Vagina (tissue), 2 donors: ENCODE measurements at regions of chr4 and their contacts with region 1.

Region 1: GRCh38 chr4:165532976-165533375 is 154.2 kb downstream of the CPE start:
- DNase-seq: peak in 1 of 2 donors; percentile 37
- H3K4me3 ChIP-seq: no peak overlapping the region
- H3K27ac ChIP-seq: no peak overlapping the region
- H3K4me1 ChIP-seq: no peaks in the 10 kb centered on the region
- H3K27me3 ChIP-seq: no peaks in the 10 kb centered on the region
- CTCF ChIP-seq: no peak
- POLR2A ChIP-seq: no peak

Region 2: DNA sequence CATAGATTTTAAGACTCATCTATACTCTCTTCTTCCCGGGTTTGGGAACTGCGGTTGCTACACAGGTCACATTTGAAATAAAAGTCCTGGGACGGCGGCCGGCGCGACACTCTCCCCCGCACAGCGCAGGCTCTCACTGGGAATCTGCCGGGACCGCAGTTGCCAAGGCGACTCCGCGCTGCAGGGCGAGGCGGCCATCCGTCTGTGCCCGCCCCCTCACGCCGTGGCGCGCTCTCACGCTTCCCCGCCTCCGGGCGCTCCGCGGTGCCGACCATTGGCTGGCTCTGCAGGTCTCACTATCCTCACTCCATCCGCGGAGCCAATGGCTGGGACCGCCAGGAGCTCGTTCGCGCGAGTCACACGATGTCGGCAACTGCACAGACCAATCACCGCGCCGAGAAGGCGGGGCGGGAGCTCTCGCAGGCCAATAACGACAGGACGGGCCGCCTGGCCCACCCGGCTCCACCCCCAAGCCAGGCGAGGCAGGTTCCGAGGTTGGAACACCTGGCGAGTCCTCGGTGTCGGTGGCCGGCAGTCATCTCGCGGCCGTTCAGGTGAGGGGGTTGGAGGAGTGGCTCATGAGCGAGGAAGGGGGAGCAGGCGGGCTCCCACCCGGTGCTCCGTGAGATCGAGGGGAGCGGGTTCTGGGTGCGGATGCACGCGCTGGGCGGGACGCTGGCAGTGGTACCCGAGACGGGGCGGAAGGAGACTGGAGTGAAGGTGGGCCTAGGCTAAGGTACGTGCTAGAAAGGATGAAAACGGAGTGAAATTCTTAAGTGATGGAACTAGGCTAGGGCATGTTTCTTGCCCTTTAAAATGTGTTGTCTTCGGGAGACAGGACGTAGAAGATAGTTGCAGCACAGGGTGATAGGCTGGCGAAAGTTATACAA is 205.5 kb before region 1 on chr4 and contains the start of gene MSMO1:
- intact Hi-C with region 1: no loop called
- DNase-seq: peak; percentile 98 to 100
- H3K4me3 ChIP-seq: peak within 1 kb of the TSS; percentile 75 to 89
- H3K27ac ChIP-seq: peak within 1 kb of the TSS; percentile 91
- H3K4me1 ChIP-seq: peaks cover 45% of the 10 kb centered on the region
- H3K27me3 ChIP-seq: no peaks in the 10 kb centered on the region
- CTCF ChIP-seq: no peak
- POLR2A ChIP-seq: peak; percentile 29 to 35
- total RNA-seq, gene MSMO1: 43.5 TPM

Region 3: GRCh38 chr4:165472943-165473676 is 59.9 kb before region 1 on chr4:
- intact Hi-C with region 1: no loop called
- DNase-seq: no peak
- H3K4me3 ChIP-seq: no peak overlapping the region
- H3K27ac ChIP-seq: no peak overlapping the region
- H3K4me1 ChIP-seq: peaks cover 6% of the 10 kb centered on the region
- H3K27me3 ChIP-seq: no peaks in the 10 kb centered on the region
- CTCF ChIP-seq: no peak
- POLR2A ChIP-seq: no peak

Region 4: GRCh38 chr4:166091912-166092510 is 559.0 kb after region 1 on chr4:
- intact Hi-C with region 1: loop called (anchors 5 kb)
- DNase-seq: no peak
- H3K4me3 ChIP-seq: no peak overlapping the region
- H3K27ac ChIP-seq: no peak overlapping the region
- H3K4me1 ChIP-seq: no peaks in the 10 kb centered on the region
- H3K27me3 ChIP-seq: no peaks in the 10 kb centered on the region
- CTCF ChIP-seq: peak; percentile 38 to 60 (median 57)
- POLR2A ChIP-seq: no peak